ENCODE measurements at regions of chr3 and their contacts with region 1.

Region 1: DNA sequence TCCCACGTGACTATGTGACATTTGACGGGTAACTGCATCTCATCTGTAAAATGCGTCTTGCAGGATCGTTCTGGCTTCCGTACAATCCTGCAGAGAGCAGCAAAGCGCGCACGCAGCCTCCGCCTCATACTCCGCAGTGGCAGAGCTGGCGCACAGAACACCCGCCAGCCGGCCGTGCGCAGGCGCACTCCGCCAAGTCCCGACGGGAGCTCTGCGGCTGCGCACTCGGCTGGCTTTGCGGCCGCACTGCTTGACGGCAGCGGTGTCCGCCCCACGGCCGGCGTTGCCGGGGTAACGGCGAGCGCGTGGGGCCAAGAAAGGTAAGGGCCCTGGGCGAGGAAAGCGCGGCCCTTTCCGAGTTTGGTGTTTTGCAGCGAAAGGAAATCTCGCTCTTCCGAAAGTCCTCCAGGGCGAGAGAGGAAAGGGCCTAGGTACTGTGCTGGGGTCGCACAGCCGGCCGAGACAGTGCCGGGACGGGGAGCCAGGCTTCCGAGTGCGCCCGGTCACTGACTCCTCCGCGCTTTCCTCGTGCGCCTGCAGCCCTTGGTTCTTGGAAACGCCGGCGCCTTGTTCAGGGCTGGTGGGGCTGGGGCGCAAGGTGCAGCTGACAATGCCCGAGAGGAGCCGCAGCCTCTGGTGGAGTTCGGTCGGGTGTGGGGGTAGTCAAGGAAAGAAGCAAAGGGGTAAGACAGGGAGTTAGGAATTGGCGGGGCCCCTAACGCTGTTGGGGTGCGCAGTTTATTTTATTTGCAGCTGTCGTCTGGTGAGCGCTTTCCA is at the start of gene TSEN2:
- DNase-seq: peak; percentile 87
- ATAC-seq: peak; percentile 95
- H3K4me3 ChIP-seq: peak within 1 kb of the TSS; percentile 78 to 84 (median 79)
- H3K27ac ChIP-seq: peak within 1 kb of the TSS; percentile 75
- H3K4me1 ChIP-seq: peaks cover 50% of the 10 kb centered on the region
- H3K27me3 ChIP-seq: no peaks in the 10 kb centered on the region
- CTCF ChIP-seq: peak; percentile 63
- EP300 ChIP-seq: no peak
- POLR2A ChIP-seq: peak; percentile 78 to 97
- RAD21 ChIP-seq: peak; percentile 58
- total RNA-seq, gene TSEN2: 16.4 and 17.3 TPM in 2 replicates

Region 2: GRCh38 chr3:11910971-11911531 is 573.3 kb before region 1 on chr3:
- CTCF ChIA-PET with region 1: no interaction called
- POLR2A ChIA-PET with region 1: no interaction called
- in situ Hi-C with region 1: no loop called
- intact Hi-C with region 1: no loop called
- DNase-seq: no peak
- ATAC-seq: peak; percentile 30; the same call in 1 of the 3 replicates
- H3K4me3 ChIP-seq: no peak overlapping the region
- H3K27ac ChIP-seq: no peak overlapping the region
- H3K4me1 ChIP-seq: peaks cover 6% of the 10 kb centered on the region
- H3K27me3 ChIP-seq: peaks cover 2 to 27% of the 10 kb centered on the region in 2 experiments
- CTCF ChIP-seq: no peak
- EP300 ChIP-seq: no peak
- POLR2A ChIP-seq: no peak
- RAD21 ChIP-seq: no peak

Region 3: GRCh38 chr3:12135029-12135657 is 349.2 kb before region 1 on chr3:
- CTCF ChIA-PET with region 1: interaction called, 15 read pairs
- POLR2A ChIA-PET with region 1: interaction called, 4 read pairs
- in situ Hi-C with region 1: loop called (anchors 5 kb)
- intact Hi-C with region 1: loop called (anchors 1 kb)
- DNase-seq: peak; percentile 43
- ATAC-seq: peak; percentile 99
- H3K4me3 ChIP-seq: no peak overlapping the region
- H3K27ac ChIP-seq: no peak overlapping the region
- H3K4me1 ChIP-seq: no peaks in the 10 kb centered on the region
- H3K27me3 ChIP-seq: no peaks in the 10 kb centered on the region
- CTCF ChIP-seq: peak; percentile 90
- EP300 ChIP-seq: no peak
- POLR2A ChIP-seq: no peak
- RAD21 ChIP-seq: peak; percentile 79

Region 4: GRCh38 chr3:12175844-12176453 is 308.4 kb before region 1 on chr3:
- CTCF ChIA-PET with region 1: no interaction called
- POLR2A ChIA-PET with region 1: interaction called, 4 read pairs
- in situ Hi-C with region 1: no loop called
- intact Hi-C with region 1: loop called (anchors 5 kb)
- DNase-seq: peak; percentile 52
- ATAC-seq: peak; percentile 98
- H3K4me3 ChIP-seq: no peak overlapping the region
- H3K27ac ChIP-seq: no peak overlapping the region
- H3K4me1 ChIP-seq: no peaks in the 10 kb centered on the region
- H3K27me3 ChIP-seq: 0 out of 5 replicates have a peak, but pooled peaks cover 0 to 2% of the 10 kb centered on the region in 2 experiments
- CTCF ChIP-seq: peak; percentile 94
- EP300 ChIP-seq: no peak
- POLR2A ChIP-seq: no peak
- RAD21 ChIP-seq: peak; percentile 78; the same call in 1 of the 2 replicates

Region 5: GRCh38 chr3:12287727-12288191 is 196.6 kb before region 1 on chr3:
- CTCF ChIA-PET with region 1: interaction called, 3 read pairs
- POLR2A ChIA-PET with region 1: interaction called, 11 read pairs
- in situ Hi-C with region 1: loop called (anchors 5 kb)
- intact Hi-C with region 1: loop called (anchors 5 kb)
- DNase-seq: no peak
- ATAC-seq: peak; percentile 85
- H3K4me3 ChIP-seq: peak overlapping the region; percentile 69 to 97 (median 90)
- H3K27ac ChIP-seq: peak overlapping the region; percentile 80
- H3K4me1 ChIP-seq: peaks cover 29% of the 10 kb centered on the region
- H3K27me3 ChIP-seq: no peaks in the 10 kb centered on the region; a peak in 1 of 5 replicates
- CTCF ChIP-seq: no peak; the same call in 1 of the 2 replicates
- EP300 ChIP-seq: no peak
- POLR2A ChIP-seq: peak in 1 of 2 experiments; percentile 30; a peak in 2 of 4 replicates
- RAD21 ChIP-seq: no peak

Region 6: DNA sequence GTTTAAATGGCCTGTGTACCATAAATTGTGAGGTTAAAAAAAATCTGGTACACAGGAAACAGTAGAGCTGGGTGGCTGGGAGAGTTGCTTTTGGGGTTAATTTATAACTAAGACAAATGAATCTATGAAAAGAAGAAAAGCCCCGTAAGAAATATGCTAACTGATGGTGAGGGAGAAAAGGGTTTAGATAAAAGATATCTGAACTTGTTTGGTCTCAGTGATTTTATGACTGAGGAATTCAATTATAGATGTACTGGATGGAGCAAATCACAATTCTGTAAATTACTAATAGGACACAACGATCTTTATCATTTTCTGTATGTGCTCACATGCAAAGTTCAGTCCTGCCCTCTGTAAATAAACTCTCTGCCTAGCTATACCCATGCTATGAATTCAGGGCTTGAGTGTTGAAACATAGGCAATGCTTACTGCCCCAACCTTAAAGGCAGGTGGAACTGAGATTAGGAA is 167.6 kb before region 1 on chr3:
- CTCF ChIA-PET with region 1: no interaction called
- POLR2A ChIA-PET with region 1: interaction called, 3 read pairs
- in situ Hi-C with region 1: no loop called
- intact Hi-C with region 1: loop called (anchors 10 kb)
- DNase-seq: peak; percentile 73
- ATAC-seq: peak; percentile 99
- H3K4me3 ChIP-seq: peak overlapping the region; percentile 17 to 44 (median 43); a peak in 3 of 6 replicates
- H3K27ac ChIP-seq: peak overlapping the region; percentile 55
- H3K4me1 ChIP-seq: peaks cover 34% of the 10 kb centered on the region
- H3K27me3 ChIP-seq: no peaks in the 10 kb centered on the region
- CTCF ChIP-seq: no peak
- EP300 ChIP-seq: no peak
- POLR2A ChIP-seq: no peak
- RAD21 ChIP-seq: no peak

Region 7: GRCh38 chr3:12405432-12406272 is 78.7 kb before region 1 on chr3:
- CTCF ChIA-PET with region 1: no interaction called
- POLR2A ChIA-PET with region 1: interaction called, 19 read pairs
- in situ Hi-C with region 1: no loop called
- intact Hi-C with region 1: loop called (anchors 1 kb)
- DNase-seq: peak; percentile 99
- ATAC-seq: peak; percentile 98
- H3K4me3 ChIP-seq: peak overlapping the region in 2 of 3 experiments; percentile 7 to 32; a peak in 2 of 6 replicates
- H3K27ac ChIP-seq: peak overlapping the region; percentile 91
- H3K4me1 ChIP-seq: peaks cover 72% of the 10 kb centered on the region
- H3K27me3 ChIP-seq: no peaks in the 10 kb centered on the region
- CTCF ChIP-seq: no peak
- EP300 ChIP-seq: peak; percentile 82 to 93; a peak in 3 of 4 replicates
- POLR2A ChIP-seq: peak; percentile 81 to 83
- RAD21 ChIP-seq: peak; percentile 41

Region 8: GRCh38 chr3:12495749-12496452 is 11.5 kb after region 1 on chr3:
- CTCF ChIA-PET with region 1: no interaction called
- POLR2A ChIA-PET with region 1: interaction called, 13 read pairs
- in situ Hi-C with region 1: no loop called
- intact Hi-C with region 1: no loop called
- DNase-seq: no peak
- ATAC-seq: peak; percentile 71
- H3K4me3 ChIP-seq: no peak overlapping the region
- H3K27ac ChIP-seq: peak overlapping the region; percentile 41
- H3K4me1 ChIP-seq: peaks cover 23% of the 10 kb centered on the region
- H3K27me3 ChIP-seq: no peaks in the 10 kb centered on the region
- CTCF ChIP-seq: peak; percentile 30; the same call in 1 of the 2 replicates
- EP300 ChIP-seq: no peak
- POLR2A ChIP-seq: no peak
- RAD21 ChIP-seq: no peak